GM10248 (cell line): ENCODE measurements at regions of chr12 and their contacts with region 1.

Region 1: DNA sequence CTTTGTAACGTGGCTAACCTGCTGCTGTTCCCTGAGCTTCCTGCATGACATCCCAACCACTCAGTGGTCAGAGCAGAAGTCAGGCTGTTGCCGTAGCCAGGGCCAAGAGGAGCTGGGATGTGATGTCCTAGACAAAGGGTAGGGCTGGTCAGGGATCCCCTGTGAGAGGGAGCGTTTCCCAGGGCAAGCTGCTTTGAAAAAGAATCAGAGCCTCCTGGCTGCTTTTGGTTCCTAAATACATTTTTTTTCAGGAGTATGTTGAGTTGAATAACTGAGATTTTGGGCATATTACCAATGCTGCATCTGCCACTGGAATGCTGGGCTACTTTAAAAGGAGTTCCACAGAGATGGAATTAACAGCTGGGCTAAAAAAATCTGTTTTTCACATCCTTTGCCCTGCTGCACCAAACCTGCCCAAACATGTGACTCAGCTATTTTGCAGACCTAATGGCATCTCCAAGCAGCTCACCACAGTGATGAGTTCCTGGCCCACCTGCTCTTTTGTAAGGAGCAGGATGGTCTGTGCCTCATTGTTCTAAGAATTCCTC is 23.9 kb downstream of the ANKRD13A start:
- DNase-seq: no peak
- CTCF ChIP-seq: no peak

Region 2: DNA sequence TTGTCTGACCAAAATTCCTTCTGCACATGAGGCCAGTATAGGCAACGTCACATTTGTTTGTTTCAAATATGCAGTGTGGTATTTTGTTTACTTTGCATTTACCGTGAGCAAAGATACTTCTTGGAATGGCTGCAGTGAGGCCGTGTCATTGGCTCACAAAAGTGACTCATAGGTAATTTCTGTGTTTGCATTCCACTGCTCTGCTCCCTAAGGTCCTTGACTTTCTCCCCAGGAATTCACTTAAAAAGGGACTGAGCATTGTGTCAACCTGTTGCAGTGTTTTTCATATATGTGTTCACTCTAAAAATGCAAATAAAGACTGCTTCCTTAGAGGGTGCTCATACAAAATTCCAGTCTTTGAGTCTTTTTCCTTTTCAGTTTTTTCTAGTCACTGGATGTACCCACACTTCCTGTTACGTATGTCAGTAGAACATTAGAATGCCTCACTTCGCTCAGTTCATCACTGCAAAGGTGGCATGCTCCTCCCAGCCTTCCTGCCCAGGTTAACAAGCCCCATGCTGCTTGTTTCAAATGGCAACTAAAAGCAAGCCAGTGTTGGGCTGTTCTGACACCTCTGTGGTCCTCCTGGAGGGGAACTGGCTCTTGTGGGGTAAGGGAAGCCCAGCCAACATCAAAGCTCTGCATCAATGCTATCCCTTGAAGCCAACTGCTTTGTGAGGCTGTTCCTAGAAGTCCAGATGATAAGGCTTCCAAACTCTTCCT is 16.1 kb after region 1 on chr12:
- CTCF ChIA-PET with region 1: interaction called, 12 read pairs
- POLR2A ChIA-PET with region 1: interaction called, 5 read pairs
- DNase-seq: no peak
- CTCF ChIP-seq: no peak